ENCODE measurements at regions of chr7 and their contacts with region 1.

Region 1: DNA sequence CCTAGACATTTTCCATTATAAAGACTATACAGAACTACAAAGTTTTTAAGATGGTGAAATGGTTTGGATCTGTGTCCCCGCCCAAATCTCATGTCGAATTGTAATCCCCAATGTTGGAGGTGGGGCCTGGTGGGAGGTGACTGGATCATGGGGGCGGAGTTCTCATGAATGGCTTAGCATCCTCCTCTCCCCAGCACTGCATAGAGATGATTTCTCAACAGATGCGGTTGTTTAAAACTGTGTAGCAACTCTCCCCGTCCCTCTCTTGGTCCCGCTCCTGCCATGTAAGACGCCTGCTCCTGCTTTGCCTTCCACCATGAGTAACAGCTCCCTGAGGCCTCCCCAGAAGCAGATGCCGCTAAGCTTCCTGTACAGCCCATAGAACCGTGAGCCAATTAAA is 1.6 kb downstream of the FAM133B start:
- DNase-seq: peak in 1 of 5 donors; percentile 4
- H3K4me3 ChIP-seq: peak overlapping the region; percentile 82 to 98
- H3K4me3 Mint-ChIP-seq: peak overlapping the region; percentile 87 to 98 (median 96)
- H3K27ac ChIP-seq: peak overlapping the region; percentile 91
- H3K27ac Mint-ChIP-seq: peak overlapping the region; percentile 19 to 97 (median 80)
- H3K4me1 ChIP-seq: peaks cover 58% of the 10 kb centered on the region
- H3K4me1 Mint-ChIP-seq: peaks cover 41 to 72% (median 52%) of the 10 kb centered on the region in 4 donors
- H3K27me3 ChIP-seq: no peaks in the 10 kb centered on the region
- H3K27me3 Mint-ChIP-seq: no peaks in the 10 kb centered on the region

Region 2: DNA sequence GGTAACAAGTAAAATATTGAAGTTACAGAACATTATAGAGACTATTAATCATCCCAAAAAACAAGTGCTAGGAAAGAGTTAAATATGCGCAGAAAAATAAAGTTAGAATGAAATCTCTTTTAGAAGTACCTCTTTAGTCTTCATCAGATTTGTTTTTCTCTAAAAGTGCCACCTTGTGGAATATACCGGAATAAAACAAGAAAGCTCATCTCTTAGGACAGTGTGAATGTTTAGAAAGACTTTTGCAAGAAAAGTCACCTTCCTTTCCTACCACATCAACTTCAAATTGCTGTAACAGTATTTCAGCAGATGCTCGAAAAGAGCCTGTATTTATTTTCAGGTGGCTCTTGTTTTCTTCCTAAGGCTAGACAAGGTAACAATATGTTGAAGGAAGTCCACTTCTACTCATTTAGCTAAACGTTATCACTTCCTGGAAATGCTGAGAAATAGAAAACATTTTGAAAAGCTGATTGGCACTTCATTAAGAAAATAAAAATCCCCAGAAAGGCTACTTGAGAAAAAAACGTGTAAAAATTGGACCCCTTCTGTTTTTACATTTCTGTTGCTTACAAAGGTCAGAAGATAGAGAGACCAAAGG is 21.5 kb after region 1 on chr7:
- CTCF ChIA-PET with region 1: interaction called, 16 read pairs
- POLR2A ChIA-PET with region 1: interaction called, 8 read pairs
- intact Hi-C with region 1: loop called (anchors 2 kb)
- DNase-seq: peak in 2 of 5 donors; percentile 19 to 27
- H3K4me3 ChIP-seq: no peak overlapping the region
- H3K4me3 Mint-ChIP-seq: no peak overlapping the region
- H3K27ac ChIP-seq: no peak overlapping the region
- H3K27ac Mint-ChIP-seq: peak overlapping the region in 4 of 7 donors; percentile 24 to 62 (median 38)
- H3K4me1 ChIP-seq: peaks cover 9% of the 10 kb centered on the region
- H3K4me1 Mint-ChIP-seq: peaks cover 4 to 9% (median 6%) of the 10 kb centered on the region in 4 donors
- H3K27me3 ChIP-seq: no peaks in the 10 kb centered on the region
- H3K27me3 Mint-ChIP-seq: no peaks in the 10 kb centered on the region

Region 3: GRCh38 chr7:92636018-92636560 is 47.5 kb after region 1 on chr7:
- CTCF ChIA-PET with region 1: no interaction called
- POLR2A ChIA-PET with region 1: no interaction called
- intact Hi-C with region 1: no loop called
- DNase-seq: no peak
- H3K4me3 ChIP-seq: no peak overlapping the region
- H3K4me3 Mint-ChIP-seq: no peak overlapping the region
- H3K27ac ChIP-seq: no peak overlapping the region
- H3K27ac Mint-ChIP-seq: no peak overlapping the region
- H3K4me1 ChIP-seq: peaks cover 61% of the 10 kb centered on the region
- H3K4me1 Mint-ChIP-seq: peaks cover 50 to 68% (median 56%) of the 10 kb centered on the region in 4 donors
- H3K27me3 ChIP-seq: no peaks in the 10 kb centered on the region
- H3K27me3 Mint-ChIP-seq: no peaks in the 10 kb centered on the region

Region 4: GRCh38 chr7:92824901-92825480 is 236.4 kb after region 1 on chr7:
- CTCF ChIA-PET with region 1: no interaction called
- POLR2A ChIA-PET with region 1: no interaction called
- intact Hi-C with region 1: no loop called
- DNase-seq: no peak
- H3K4me3 ChIP-seq: no peak overlapping the region
- H3K4me3 Mint-ChIP-seq: peak overlapping the region in 3 of 8 donors; percentile 31 to 51 (median 33)
- H3K27ac ChIP-seq: no peak overlapping the region
- H3K27ac Mint-ChIP-seq: peak overlapping the region in 2 of 7 donors; percentile 10 to 68
- H3K4me1 ChIP-seq: peaks cover 49% of the 10 kb centered on the region
- H3K4me1 Mint-ChIP-seq: peaks cover 38 to 54% (median 44%) of the 10 kb centered on the region in 4 donors
- H3K27me3 ChIP-seq: no peaks in the 10 kb centered on the region
- H3K27me3 Mint-ChIP-seq: no peaks in the 10 kb centered on the region